GM10248 (cell line): ENCODE measurements at regions of chr1 and their contacts with region 1.

Region 1: GRCh38 chr1:13725714-13726175 is 25.8 kb downstream of the PRDM2 start:
- DNase-seq: peak; percentile 39
- CTCF ChIP-seq: peak; percentile 50

Region 2: DNA sequence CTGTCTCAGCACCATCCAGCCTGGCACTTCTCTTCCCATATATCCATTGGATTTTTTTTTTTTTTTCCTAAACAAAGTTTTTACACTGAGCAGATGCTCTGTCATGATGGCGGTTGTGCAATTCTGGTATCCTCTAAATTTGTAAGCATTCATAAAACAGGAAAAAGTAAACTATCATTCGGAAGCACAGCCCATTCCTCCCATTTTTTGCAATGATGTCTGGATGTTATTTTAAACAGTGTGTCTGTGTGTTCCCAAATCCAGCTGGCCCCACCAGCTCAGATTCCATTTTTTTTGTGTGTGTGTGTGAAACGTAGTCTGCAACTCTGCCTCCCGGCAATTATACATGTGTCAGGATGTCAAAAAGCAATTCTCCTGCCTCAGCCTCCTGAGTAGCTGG is 108.6 kb before region 1 on chr1:
- CTCF ChIA-PET with region 1: no interaction called
- POLR2A ChIA-PET with region 1: no interaction called
- DNase-seq: no peak
- CTCF ChIP-seq: no peak

Region 3: DNA sequence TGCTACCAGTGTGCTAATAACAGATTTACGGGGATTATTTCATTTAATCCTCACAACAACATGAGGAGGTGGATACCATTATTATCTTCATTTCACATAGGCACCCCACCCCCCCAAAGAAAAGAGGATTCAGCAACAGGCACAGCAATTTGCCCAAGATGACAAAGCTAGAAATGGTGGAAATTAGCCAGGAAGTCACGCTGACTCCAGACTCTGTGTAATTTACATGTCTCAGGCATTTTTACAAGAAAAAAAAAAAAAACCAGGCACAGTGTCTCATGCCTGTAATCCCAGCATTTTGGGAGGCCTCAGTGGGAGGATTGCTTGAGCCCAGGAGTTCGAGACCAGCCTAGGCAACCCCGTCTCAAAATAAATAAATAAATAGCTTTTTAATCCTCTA is 63.3 kb before region 1 on chr1:
- CTCF ChIA-PET with region 1: interaction called, 49 read pairs
- POLR2A ChIA-PET with region 1: no interaction called
- DNase-seq: no peak
- CTCF ChIP-seq: no peak

Region 4: GRCh38 chr1:13699936-13700520 is 25.7 kb before region 1 on chr1 and contains the start of gene PRDM2:
- CTCF ChIA-PET with region 1: interaction called, 256 read pairs
- POLR2A ChIA-PET with region 1: interaction called, 6 read pairs
- DNase-seq: peak; percentile 76
- CTCF ChIP-seq: no peak

Region 5: GRCh38 chr1:14010431-14010830 is 284.7 kb after region 1 on chr1:
- CTCF ChIA-PET with region 1: no interaction called
- POLR2A ChIA-PET with region 1: no interaction called
- DNase-seq: no peak
- CTCF ChIP-seq: no peak